ENCODE measurements at regions of chr2 and their contacts with region 1.

Region 1: GRCh38 chr2:145043399-145043834 is 523.5 kb upstream of the ZEB2 start:
- DNase-seq: no peak
- ATAC-seq: no peak
- H3K4me3 ChIP-seq: no peak overlapping the region
- H3K27ac ChIP-seq: no peak overlapping the region
- H3K4me1 ChIP-seq: peaks cover 30% of the 10 kb centered on the region
- H3K27me3 ChIP-seq: no peaks in the 10 kb centered on the region
- CTCF ChIP-seq: no peak; the same call in 1 of the 2 replicates

Region 2: DNA sequence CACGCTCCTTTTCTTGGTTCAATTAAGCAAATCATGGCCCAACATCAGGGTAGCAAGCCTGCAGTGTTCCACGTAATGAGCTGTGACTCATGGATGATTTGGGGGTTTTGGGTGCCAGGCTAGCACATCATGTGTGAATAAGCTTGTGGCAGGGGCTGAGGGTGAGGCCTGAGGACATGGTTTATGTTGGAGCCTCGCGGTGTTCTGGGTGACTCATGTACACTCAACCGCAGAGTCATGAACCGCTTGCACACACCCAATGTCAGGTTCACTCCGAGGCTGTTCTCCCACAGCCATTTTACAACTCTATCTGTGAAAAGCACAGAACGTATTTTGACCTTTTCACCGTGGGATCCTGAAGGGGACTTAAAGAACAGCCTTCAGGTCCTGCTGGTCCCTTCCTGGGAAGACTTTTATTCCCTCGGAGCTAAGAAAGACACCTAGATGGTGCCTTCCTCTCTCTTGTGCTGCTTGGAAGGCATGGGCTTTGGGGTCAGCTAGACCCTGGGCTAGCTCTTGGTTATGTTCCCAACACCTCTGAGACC is 383.6 kb before region 1 on chr2:
- CTCF ChIA-PET with region 1: no interaction called
- POLR2A ChIA-PET with region 1: no interaction called
- intact Hi-C with region 1: loop called (anchors 10 kb)
- DNase-seq: peak; percentile 96
- ATAC-seq: peak; percentile 99
- H3K4me3 ChIP-seq: 0 out of 2 replicates have a peak overlapping the region, but pooled peaks have one; percentile 36
- H3K27ac ChIP-seq: peak overlapping the region; percentile 88
- H3K4me1 ChIP-seq: peaks cover 21% of the 10 kb centered on the region
- H3K27me3 ChIP-seq: no peaks in the 10 kb centered on the region
- CTCF ChIP-seq: no peak

Region 3: GRCh38 chr2:144950899-144951560 is 92.4 kb before region 1 on chr2:
- CTCF ChIA-PET with region 1: no interaction called
- POLR2A ChIA-PET with region 1: no interaction called
- intact Hi-C with region 1: loop called (anchors 1 kb)
- DNase-seq: peak; percentile 90
- ATAC-seq: peak; percentile 96
- H3K4me3 ChIP-seq: no peak overlapping the region
- H3K27ac ChIP-seq: peak overlapping the region; percentile 85
- H3K4me1 ChIP-seq: peaks cover 38% of the 10 kb centered on the region
- H3K27me3 ChIP-seq: no peaks in the 10 kb centered on the region
- CTCF ChIP-seq: no peak

Region 4: GRCh38 chr2:145007093-145007959 is 36.1 kb before region 1 on chr2:
- CTCF ChIA-PET with region 1: no interaction called
- POLR2A ChIA-PET with region 1: no interaction called
- intact Hi-C with region 1: loop called (anchors 2 kb)
- DNase-seq: peak; percentile 97
- ATAC-seq: peak; percentile 86
- H3K4me3 ChIP-seq: peak overlapping the region; percentile 50
- H3K27ac ChIP-seq: peak overlapping the region; percentile 95
- H3K4me1 ChIP-seq: peaks cover 40% of the 10 kb centered on the region
- H3K27me3 ChIP-seq: no peaks in the 10 kb centered on the region
- CTCF ChIP-seq: no peak

Region 5: DNA sequence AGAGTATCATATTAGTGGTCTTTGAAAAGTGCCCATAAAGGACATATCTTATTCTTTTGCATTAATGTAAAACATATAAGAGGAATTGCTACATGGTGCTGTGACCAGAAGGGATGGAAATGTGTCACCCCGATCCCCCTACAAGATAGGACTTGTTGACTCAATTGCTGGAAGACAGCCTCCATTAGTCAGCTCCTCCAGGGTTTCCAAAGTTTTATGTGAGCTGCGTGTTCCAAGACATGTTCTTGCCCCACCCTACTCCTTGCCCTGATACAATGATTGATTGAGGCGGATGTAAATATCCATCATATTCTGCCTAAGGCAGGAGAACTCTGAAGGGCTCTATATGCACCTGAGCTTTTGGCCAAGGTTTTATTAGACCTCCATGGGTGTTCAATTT is 17.5 kb after region 1 on chr2:
- CTCF ChIA-PET with region 1: no interaction called
- POLR2A ChIA-PET with region 1: no interaction called
- intact Hi-C with region 1: no loop called
- DNase-seq: peak; percentile 97
- ATAC-seq: peak; percentile 90
- H3K4me3 ChIP-seq: no peak overlapping the region
- H3K27ac ChIP-seq: peak overlapping the region; percentile 79
- H3K4me1 ChIP-seq: peaks cover 36% of the 10 kb centered on the region
- H3K27me3 ChIP-seq: no peaks in the 10 kb centered on the region
- CTCF ChIP-seq: no peak